Adrenal gland (tissue), 19 donors: ENCODE measurements at regions of chr6 and their contacts with region 1.

Region 1: DNA sequence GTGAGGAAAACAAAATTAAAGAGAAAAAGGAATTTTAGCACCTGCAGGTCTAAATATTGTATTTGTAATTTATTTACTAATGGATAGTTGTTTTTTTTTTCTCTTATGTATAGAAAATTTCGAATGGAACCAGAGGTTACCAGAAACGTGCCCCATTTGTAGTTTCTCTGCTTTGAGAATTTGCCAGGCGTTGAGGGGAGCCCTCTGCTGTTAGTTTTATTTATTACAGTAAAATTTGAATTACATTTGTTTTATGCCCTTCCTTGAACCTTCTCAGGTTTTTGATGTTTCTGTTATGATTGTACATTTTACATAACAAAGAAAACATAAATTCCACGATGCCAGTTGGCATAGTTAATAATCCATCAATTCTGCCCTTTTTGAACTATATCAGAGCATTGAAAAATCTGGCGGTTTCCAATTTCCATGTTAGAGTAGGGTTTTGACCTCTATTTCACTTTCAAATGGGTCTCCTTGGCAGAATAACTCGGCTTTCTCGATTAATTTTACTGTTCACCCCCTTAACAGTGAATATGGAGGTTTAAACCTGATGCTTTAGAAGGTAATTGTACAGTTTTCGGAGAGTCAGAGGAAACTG is 35.1 kb upstream of the RFPL4B start:
- DNase-seq: no peak
- H3K4me3 ChIP-seq: no peak overlapping the region
- H3K27ac ChIP-seq: no peak overlapping the region
- H3K4me1 ChIP-seq: no peaks in the 10 kb centered on the region
- H3K27me3 ChIP-seq: no peaks in the 10 kb centered on the region
- CTCF ChIP-seq: peak; percentile 39 to 74 (median 63)
- POLR2A ChIP-seq: no peak

Region 2: GRCh38 chr6:111280445-111280955 is 1031.5 kb before region 1 on chr6:
- intact Hi-C with region 1: no loop called
- DNase-seq: no peak
- H3K4me3 ChIP-seq: no peak overlapping the region
- H3K27ac ChIP-seq: no peak overlapping the region
- H3K4me1 ChIP-seq: no peaks in the 10 kb centered on the region
- H3K27me3 ChIP-seq: no peaks in the 10 kb centered on the region
- CTCF ChIP-seq: no peak
- POLR2A ChIP-seq: no peak

Region 3: GRCh38 chr6:112180095-112180820 is 131.8 kb before region 1 on chr6:
- intact Hi-C with region 1: loop called (anchors 2 to 5 kb)
- DNase-seq: peak in 6 of 7 donors; percentile 23 to 56 (median 52)
- H3K4me3 ChIP-seq: no peak overlapping the region
- H3K27ac ChIP-seq: no peak overlapping the region
- H3K4me1 ChIP-seq: no peaks in the 10 kb centered on the region
- H3K27me3 ChIP-seq: no peaks in the 10 kb centered on the region
- CTCF ChIP-seq: peak; percentile 48 to 80 (median 69)
- POLR2A ChIP-seq: no peak